Activated CD4-positive, alpha-beta T cell treated with anti-CD3 and anti-CD28 coated beads for 36 hours (primary cell): ENCODE measurements at regions of chr10 and their contacts with region 1.

Region 1: GRCh38 chr10:67779465-67780203 is 58.4 kb downstream of the DNAJC12 start:
- DNase-seq: peak; percentile 78
- ATAC-seq: peak; percentile 76
- H3K4me3 Mint-ChIP-seq: no peak overlapping the region
- H3K27ac Mint-ChIP-seq: peak overlapping the region; percentile 49
- H3K4me1 Mint-ChIP-seq: peaks cover 19% of the 10 kb centered on the region
- H3K27me3 Mint-ChIP-seq: no peaks in the 10 kb centered on the region

Region 2: GRCh38 chr10:66931340-66931948 is 848.2 kb before region 1 on chr10:
- CTCF ChIA-PET with region 1: no interaction called
- POLR2A ChIA-PET with region 1: no interaction called
- intact Hi-C with region 1: loop called in 1 of 2 experiments (anchors 5 kb)
- DNase-seq: peak; percentile 3
- ATAC-seq: no peak
- H3K4me3 Mint-ChIP-seq: no peak overlapping the region
- H3K27ac Mint-ChIP-seq: no peak overlapping the region
- H3K4me1 Mint-ChIP-seq: no peaks in the 10 kb centered on the region
- H3K27me3 Mint-ChIP-seq: peaks cover 32% of the 10 kb centered on the region

Region 3: GRCh38 chr10:67520924-67521520 is 258.6 kb before region 1 on chr10:
- CTCF ChIA-PET with region 1: interaction called, 5 read pairs
- POLR2A ChIA-PET with region 1: no interaction called
- intact Hi-C with region 1: loop called in 1 of 2 experiments (anchors 1 kb)
- DNase-seq: peak; percentile 58
- ATAC-seq: peak; percentile 65
- H3K4me3 Mint-ChIP-seq: no peak overlapping the region
- H3K27ac Mint-ChIP-seq: no peak overlapping the region
- H3K4me1 Mint-ChIP-seq: no peaks in the 10 kb centered on the region
- H3K27me3 Mint-ChIP-seq: peaks cover 3% of the 10 kb centered on the region

Region 4: GRCh38 chr10:67666416-67667034 is 113.1 kb before region 1 on chr10:
- CTCF ChIA-PET with region 1: interaction called, 41 read pairs
- POLR2A ChIA-PET with region 1: no interaction called
- intact Hi-C with region 1: loop called (anchors 1 kb)
- DNase-seq: no peak
- ATAC-seq: no peak
- H3K4me3 Mint-ChIP-seq: no peak overlapping the region
- H3K27ac Mint-ChIP-seq: no peak overlapping the region
- H3K4me1 Mint-ChIP-seq: no peaks in the 10 kb centered on the region
- H3K27me3 Mint-ChIP-seq: no peaks in the 10 kb centered on the region

Region 5: DNA sequence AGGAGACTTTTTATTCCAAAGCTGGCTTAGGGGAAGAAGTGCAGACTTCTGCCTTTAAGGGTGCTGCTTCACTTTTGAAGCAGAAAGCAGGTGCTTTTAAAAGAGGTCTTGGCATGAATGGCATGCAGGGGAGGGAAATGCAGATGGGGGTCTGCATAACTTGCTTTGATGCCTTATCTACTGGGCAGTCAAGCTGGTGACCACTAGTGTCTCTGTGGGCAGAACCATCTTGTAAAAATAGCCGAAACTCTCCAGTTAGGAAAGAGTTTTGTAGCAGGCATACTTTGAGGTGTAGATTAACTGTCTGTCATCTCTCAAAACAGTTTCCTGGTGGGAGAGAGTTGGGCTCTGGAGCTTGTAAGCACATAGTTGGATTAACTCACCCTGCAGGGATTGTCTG is 73.7 kb before region 1 on chr10:
- CTCF ChIA-PET with region 1: interaction called, 11 read pairs
- POLR2A ChIA-PET with region 1: no interaction called
- intact Hi-C with region 1: no loop called
- DNase-seq: no peak
- ATAC-seq: no peak
- H3K4me3 Mint-ChIP-seq: no peak overlapping the region
- H3K27ac Mint-ChIP-seq: no peak overlapping the region
- H3K4me1 Mint-ChIP-seq: no peaks in the 10 kb centered on the region
- H3K27me3 Mint-ChIP-seq: peaks cover 10% of the 10 kb centered on the region

Region 6: DNA sequence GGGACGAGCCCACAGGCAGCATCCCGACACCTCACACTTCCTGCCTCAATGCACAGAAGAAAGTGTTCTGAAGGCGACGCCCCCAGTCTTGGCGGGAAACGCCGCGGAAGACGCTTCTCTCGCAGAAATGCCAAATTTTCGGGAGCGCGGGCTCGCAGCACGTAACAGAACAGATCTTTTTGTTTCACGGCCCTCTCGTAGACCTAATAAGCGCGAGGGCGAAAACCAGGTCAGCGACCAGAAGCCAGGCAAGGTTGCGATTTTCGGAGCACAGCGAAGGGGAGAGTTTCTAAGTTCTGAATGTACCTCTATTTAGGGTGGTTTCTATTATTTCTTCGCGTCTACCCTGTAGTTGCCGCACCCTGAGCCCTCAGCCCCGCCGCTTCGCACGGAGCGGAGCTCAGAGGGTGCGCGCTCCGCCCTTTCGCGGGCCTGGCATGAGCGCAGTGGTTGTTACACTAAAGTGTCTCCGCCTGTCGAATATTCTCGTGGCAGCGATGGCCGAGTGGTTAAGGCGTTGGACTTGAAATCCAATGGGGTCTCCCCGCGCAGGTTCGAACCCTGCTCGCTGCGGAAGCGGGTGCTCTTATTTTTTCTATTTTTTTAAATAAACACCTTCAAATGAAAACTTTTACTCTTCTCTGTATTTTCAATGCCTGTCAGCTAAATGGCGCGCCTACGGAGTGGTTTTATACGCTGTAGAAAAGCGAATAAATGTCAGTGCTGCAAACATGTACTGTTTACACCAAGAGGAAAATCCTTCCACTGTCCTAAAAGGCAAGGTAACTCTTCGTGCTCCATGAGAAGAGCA is 15.4 kb before region 1 on chr10:
- CTCF ChIA-PET with region 1: interaction called, 46 read pairs
- POLR2A ChIA-PET with region 1: no interaction called
- intact Hi-C with region 1: no loop called
- DNase-seq: peak; percentile 96
- ATAC-seq: peak; percentile 86
- H3K4me3 Mint-ChIP-seq: peak overlapping the region; percentile 86
- H3K27ac Mint-ChIP-seq: peak overlapping the region; percentile 99
- H3K4me1 Mint-ChIP-seq: peaks cover 15% of the 10 kb centered on the region
- H3K27me3 Mint-ChIP-seq: peaks cover 2% of the 10 kb centered on the region